Vagina (tissue), 2 donors: ENCODE measurements at regions of chr9 and their contacts with region 1.

Region 1: DNA sequence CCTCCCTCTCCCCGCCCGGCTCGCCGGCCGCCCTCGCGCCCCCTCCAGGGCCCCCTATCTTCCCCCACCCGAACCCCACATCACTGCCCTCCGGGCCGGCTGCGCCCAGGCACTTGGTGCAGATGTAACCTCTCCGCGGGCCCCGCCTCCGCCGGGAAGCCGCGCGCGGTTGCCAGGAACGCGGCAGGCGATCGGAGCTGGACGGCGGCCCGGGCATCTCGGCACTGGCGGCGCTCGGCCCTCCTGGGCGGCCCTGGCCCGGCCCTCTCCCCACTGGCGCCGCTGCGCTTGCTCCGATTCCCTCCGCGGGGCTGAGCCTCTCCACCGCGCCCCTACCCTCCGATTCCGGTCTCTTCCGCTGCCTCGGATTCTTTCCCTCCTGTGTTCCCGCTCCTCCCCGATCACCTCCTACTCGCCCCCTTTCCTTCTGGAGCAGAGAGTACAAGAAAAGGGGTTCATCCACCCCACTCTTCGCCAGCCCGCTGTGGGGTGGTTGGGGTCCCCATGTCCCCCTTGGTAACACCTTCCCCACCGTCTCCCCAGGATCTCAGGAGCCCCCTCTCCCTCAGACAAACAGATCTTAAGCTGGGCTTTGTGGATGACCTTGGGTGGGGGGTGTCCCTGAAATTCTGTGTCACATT is 70.6 kb downstream of the C9orf50 start:
- DNase-seq: peak in 1 of 2 donors; percentile 90
- H3K4me3 ChIP-seq: peak overlapping the region; percentile 55 to 72
- H3K27ac ChIP-seq: peak overlapping the region; percentile 88
- H3K4me1 ChIP-seq: peaks cover 23% of the 10 kb centered on the region
- H3K27me3 ChIP-seq: no peaks in the 10 kb centered on the region
- CTCF ChIP-seq: no peak
- POLR2A ChIP-seq: no peak

Region 2: GRCh38 chr9:129495534-129496325 is 54.6 kb before region 1 on chr9:
- intact Hi-C with region 1: loop called (anchors 5 kb)
- DNase-seq: peak in 1 of 2 donors; percentile 94
- H3K4me3 ChIP-seq: peak overlapping the region; percentile 71 to 86
- H3K27ac ChIP-seq: peak overlapping the region; percentile 99
- H3K4me1 ChIP-seq: peaks cover 82% of the 10 kb centered on the region
- H3K27me3 ChIP-seq: no peaks in the 10 kb centered on the region
- CTCF ChIP-seq: no peak
- POLR2A ChIP-seq: peak in 1 of 2 donors; percentile 10

Region 3: GRCh38 chr9:131125128-131126058 is 1575.1 kb after region 1 on chr9 and contains the start of gene NUP214:
- intact Hi-C with region 1: loop called (anchors 5 kb)
- DNase-seq: peak; percentile 98 to 99
- H3K4me3 ChIP-seq: peak within 1 kb of the TSS; percentile 72 to 94
- H3K27ac ChIP-seq: peak within 1 kb of the TSS; percentile 78
- H3K4me1 ChIP-seq: peaks cover 22% of the 10 kb centered on the region
- H3K27me3 ChIP-seq: no peaks in the 10 kb centered on the region
- CTCF ChIP-seq: no peak
- POLR2A ChIP-seq: peak in 1 of 2 donors; percentile 25
- total RNA-seq, gene NUP214: 70.2 TPM